ENCODE measurements at regions of chr1 and their contacts with region 1.

Region 1: GRCh38 chr1:160681067-160681890 is 30.3 kb downstream of the CD48 start:
- DNase-seq: peak; percentile 83 to 95 (median 88)
- ATAC-seq: peak; percentile 93
- H3K4me3 ChIP-seq: no peak overlapping the region
- H3K4me3 Mint-ChIP-seq: peak overlapping the region; percentile 2
- H3K27ac ChIP-seq: peak overlapping the region; percentile 43 to 53
- H3K27ac Mint-ChIP-seq: peak overlapping the region; percentile 80
- H3K4me1 ChIP-seq: peaks cover 56% of the 10 kb centered on the region
- H3K4me1 Mint-ChIP-seq: peaks cover 52% of the 10 kb centered on the region
- H3K27me3 ChIP-seq: no peaks in the 10 kb centered on the region
- H3K27me3 Mint-ChIP-seq: no peaks in the 10 kb centered on the region
- CTCF ChIP-seq: peak; percentile 82

Region 2: GRCh38 chr1:160618763-160619274 is 62.5 kb before region 1 on chr1:
- CTCF ChIA-PET with region 1: interaction called, 37 read pairs
- POLR2A ChIA-PET with region 1: interaction called, 26 read pairs
- intact Hi-C with region 1: no loop called
- DNase-seq: peak in 8 of 14 experiments; percentile 19 to 79 (median 44)
- ATAC-seq: peak; percentile 67
- H3K4me3 ChIP-seq: no peak overlapping the region
- H3K4me3 Mint-ChIP-seq: no peak overlapping the region
- H3K27ac ChIP-seq: no peak overlapping the region
- H3K27ac Mint-ChIP-seq: peak overlapping the region; percentile 42
- H3K4me1 ChIP-seq: peaks cover 44% of the 10 kb centered on the region
- H3K4me1 Mint-ChIP-seq: peaks cover 84% of the 10 kb centered on the region
- H3K27me3 ChIP-seq: no peaks in the 10 kb centered on the region
- H3K27me3 Mint-ChIP-seq: no peaks in the 10 kb centered on the region
- CTCF ChIP-seq: peak; percentile 80

Region 3: DNA sequence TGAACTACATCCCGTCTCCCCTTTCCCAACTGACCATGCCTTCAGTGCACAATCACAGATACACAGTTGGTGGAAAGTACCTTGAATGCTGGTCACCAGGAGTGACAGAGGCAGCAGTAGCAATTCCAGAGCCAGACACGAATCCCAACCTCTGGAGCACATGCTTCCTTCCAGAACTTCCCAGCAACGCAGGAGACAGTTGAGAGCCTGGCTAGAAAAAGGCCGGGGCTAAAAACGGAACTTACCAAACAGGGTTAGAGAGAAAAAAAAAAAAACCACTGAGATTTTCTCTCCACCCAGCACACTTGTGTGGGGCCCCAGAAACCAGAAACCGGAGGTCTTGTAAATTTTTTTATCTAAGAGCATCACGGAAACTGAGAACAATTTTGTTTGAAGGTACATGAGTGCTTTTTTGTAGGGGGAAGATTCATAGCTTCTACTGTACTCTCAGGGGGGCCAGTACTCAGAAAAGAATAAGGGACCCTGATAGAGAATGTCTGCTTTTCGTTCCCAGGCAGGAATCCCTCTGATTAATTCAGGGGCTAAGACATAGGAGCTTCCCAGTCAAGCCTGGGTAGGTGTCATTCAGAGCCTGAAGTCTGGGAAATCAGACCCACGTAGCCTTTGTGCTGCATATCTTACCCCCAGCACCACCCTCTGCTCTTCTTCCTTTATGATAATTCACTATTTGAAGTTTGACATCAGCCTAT is 30.5 kb after region 1 on chr1 and contains the start of gene CD48:
- CTCF ChIA-PET with region 1: interaction called, 21 read pairs
- POLR2A ChIA-PET with region 1: interaction called, 49 read pairs
- intact Hi-C with region 1: loop called in 1 of 2 experiments (anchors 1 kb)
- DNase-seq: peak in 11 of 14 experiments; percentile 26 to 88 (median 50)
- ATAC-seq: peak; percentile 52
- H3K4me3 ChIP-seq: peak within 1 kb of the TSS; percentile 73
- H3K4me3 Mint-ChIP-seq: no peak within 1 kb of the TSS
- H3K27ac ChIP-seq: peak within 1 kb of the TSS; percentile 86 to 93
- H3K27ac Mint-ChIP-seq: no peak within 1 kb of the TSS
- H3K4me1 ChIP-seq: peaks cover 52% of the 10 kb centered on the region
- H3K4me1 Mint-ChIP-seq: peaks cover 50% of the 10 kb centered on the region
- H3K27me3 ChIP-seq: no peaks in the 10 kb centered on the region
- H3K27me3 Mint-ChIP-seq: no peaks in the 10 kb centered on the region
- CTCF ChIP-seq: no peak
- total RNA-seq, gene CD48: 387 to 395 TPM

Region 4: DNA sequence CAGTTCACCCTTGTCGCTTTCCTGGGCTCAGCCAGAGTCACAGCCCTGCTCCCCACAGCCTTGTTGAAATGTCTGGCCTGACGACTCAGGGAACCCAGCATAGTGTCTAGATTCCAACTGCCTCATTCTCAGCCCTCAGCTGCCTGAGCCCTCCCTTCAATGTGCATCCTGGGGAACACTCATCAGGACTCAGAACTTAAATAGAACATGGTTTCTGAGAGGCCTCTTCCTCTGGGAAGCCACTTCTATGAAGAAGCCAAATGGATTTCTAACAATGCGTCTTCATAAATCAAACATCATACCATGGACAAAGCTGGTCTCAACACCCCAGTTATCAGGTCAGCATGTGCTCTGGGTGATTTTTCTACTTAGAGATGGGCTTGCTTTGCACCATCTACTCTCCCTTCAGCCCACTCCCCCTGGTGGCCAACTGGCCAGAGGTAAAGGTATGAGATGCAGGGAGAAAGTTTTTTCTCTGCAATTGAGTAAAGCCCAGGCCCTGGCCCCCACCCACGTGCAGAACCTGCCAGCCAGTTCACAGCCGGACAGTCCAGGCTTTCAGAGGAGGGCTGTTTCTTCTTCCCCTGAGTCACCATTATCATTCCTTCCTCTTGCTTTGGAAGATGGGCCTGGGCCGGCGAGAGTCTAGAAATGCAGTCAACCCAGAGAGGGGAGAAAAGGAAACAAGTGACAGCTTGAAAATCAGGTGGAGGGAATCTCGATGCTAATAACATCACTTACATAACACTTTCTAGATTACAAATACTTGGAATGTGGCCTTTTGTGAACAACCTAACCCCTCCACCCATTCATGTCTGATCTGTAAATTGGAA is 149.3 kb after region 1 on chr1:
- CTCF ChIA-PET with region 1: interaction called, 5 read pairs
- POLR2A ChIA-PET with region 1: interaction called, 3 read pairs
- intact Hi-C with region 1: loop called (anchors 1 to 2 kb)
- DNase-seq: peak; percentile 67 to 89 (median 76)
- ATAC-seq: peak; percentile 84
- H3K4me3 ChIP-seq: no peak overlapping the region
- H3K4me3 Mint-ChIP-seq: no peak overlapping the region
- H3K27ac ChIP-seq: no peak overlapping the region
- H3K27ac Mint-ChIP-seq: peak overlapping the region; percentile 81
- H3K4me1 ChIP-seq: peaks cover 17% of the 10 kb centered on the region
- H3K4me1 Mint-ChIP-seq: peaks cover 35% of the 10 kb centered on the region
- H3K27me3 ChIP-seq: no peaks in the 10 kb centered on the region
- H3K27me3 Mint-ChIP-seq: no peaks in the 10 kb centered on the region
- CTCF ChIP-seq: peak; percentile 87

Region 5: GRCh38 chr1:160884579-160884978 is 203.3 kb after region 1 on chr1:
- CTCF ChIA-PET with region 1: interaction called, 4 read pairs
- POLR2A ChIA-PET with region 1: no interaction called
- intact Hi-C with region 1: loop called in 1 of 2 experiments (anchors 1 kb)
- DNase-seq: peak in 1 of 14 experiments; percentile 72
- ATAC-seq: peak; percentile 78
- H3K4me3 ChIP-seq: no peak overlapping the region
- H3K4me3 Mint-ChIP-seq: no peak overlapping the region
- H3K27ac ChIP-seq: no peak overlapping the region
- H3K27ac Mint-ChIP-seq: no peak overlapping the region
- H3K4me1 ChIP-seq: peaks cover 9% of the 10 kb centered on the region
- H3K4me1 Mint-ChIP-seq: peaks cover 5% of the 10 kb centered on the region
- H3K27me3 ChIP-seq: peaks cover 0 to 4% of the 10 kb centered on the region in 2 experiments
- H3K27me3 Mint-ChIP-seq: peaks cover 4% of the 10 kb centered on the region
- CTCF ChIP-seq: peak; percentile 71

Measured in CD4-positive, alpha-beta T cell (primary cell).